T-cell (primary cell): ENCODE measurements at regions of chr1 and their contacts with region 1.

Region 1: DNA sequence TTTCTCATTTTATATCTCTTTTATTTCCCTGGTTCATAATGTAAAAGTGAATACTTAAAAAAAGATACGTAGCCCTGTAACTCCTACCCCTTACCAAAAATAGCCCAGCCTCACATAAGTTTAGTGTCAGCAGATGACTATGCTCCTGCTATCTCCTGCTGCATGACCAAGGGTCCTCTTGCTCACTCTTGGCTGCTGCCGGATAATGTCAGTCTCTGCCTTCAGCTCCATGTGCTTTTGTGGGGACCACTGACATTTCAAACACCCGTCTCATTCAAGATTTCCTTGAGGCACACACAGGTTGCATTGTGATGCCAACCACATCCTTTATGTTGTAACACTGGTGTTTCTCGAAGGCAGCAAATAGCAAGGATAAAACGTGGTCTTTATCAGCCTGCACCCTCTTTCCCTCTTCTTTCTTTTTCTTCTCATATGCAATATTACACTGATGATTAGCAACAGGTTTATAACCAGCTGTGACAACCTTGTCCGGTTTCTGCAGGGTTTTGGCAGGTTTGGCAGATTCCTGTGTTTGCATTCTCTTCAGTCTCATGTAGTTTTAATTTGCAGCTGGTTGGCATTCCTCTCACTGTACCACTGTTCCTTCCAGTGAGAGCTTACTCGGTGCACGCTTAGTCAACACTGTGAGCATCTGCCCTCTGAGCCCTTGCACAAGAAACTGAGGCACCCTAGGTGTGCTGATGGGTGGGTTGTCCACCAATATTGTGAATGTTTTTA is 62.2 kb downstream of the ZNF684 start:
- DNase-seq: no peak
- ATAC-seq: no peak
- H3K4me3 ChIP-seq: no peak overlapping the region
- H3K4me3 Mint-ChIP-seq: no peak overlapping the region
- H3K27ac ChIP-seq: no peak overlapping the region
- H3K27ac Mint-ChIP-seq: no peak overlapping the region
- H3K4me1 ChIP-seq: no peaks in the 10 kb centered on the region
- H3K4me1 Mint-ChIP-seq: peaks cover 6 to 11% (median 8%) of the 10 kb centered on the region in 3 donors
- H3K27me3 ChIP-seq: peaks cover 0 to 15% of the 10 kb centered on the region in 2 experiments
- H3K27me3 Mint-ChIP-seq: peaks cover 3 to 9% of the 10 kb centered on the region in 2 donors

Region 2: DNA sequence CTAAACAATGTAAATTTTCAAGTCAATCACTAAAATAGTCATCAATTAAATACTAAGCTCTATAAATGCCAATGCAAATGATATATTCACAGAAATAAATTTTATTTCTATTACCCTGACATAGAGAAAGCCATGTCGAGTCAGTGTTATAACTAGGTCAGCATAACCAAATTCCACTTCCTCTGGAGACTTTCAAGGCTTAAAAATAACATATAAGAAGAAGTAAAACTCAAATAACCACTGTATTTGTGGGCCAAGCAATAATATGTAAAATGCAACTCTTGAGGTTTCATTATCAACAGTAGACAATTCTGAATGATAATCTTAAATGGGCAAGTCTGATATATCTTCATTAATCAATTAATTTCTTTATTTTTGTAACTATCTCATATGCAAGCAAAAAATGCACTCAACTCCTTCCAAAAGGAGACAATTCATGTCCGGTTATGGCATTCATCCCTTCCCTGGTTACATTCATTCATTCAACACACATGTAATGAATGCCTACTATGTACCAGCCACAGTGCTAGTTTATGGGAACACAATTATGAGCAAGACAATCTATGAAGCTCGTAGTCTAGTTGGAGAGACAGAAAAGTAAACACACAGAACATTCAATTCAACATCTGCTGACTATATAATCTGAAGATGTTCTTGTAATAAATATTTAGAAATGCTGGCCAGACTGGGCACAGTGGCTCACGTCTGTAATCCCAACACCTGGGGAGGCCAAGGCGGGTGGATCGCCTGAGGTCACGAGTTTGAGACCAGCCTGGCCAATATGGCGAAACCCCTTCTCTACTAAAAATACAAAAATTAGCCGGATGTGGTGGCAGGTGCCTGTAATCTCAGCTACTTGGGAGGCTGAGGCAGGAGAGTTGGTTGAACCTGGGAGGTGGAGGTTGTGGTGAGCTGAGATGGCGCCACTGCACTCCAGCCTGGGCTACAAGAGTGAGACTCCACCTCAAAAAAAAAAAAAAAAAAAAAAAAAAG is 590.2 kb before region 1 on chr1:
- CTCF ChIA-PET with region 1: no interaction called
- POLR2A ChIA-PET with region 1: interaction called in 1 of 2 experiments, 13 read pairs
- DNase-seq: no peak
- ATAC-seq: no peak
- H3K4me3 ChIP-seq: no peak overlapping the region
- H3K4me3 Mint-ChIP-seq: no peak overlapping the region
- H3K27ac ChIP-seq: no peak overlapping the region
- H3K27ac Mint-ChIP-seq: peak overlapping the region in 1 of 2 donors; percentile 72
- H3K4me1 ChIP-seq: peaks cover 0 to 4% of the 10 kb centered on the region in 2 experiments
- H3K4me1 Mint-ChIP-seq: peaks cover 0 to 19% (median 5%) of the 10 kb centered on the region in 3 donors
- H3K27me3 ChIP-seq: no peaks in the 10 kb centered on the region
- H3K27me3 Mint-ChIP-seq: no peaks in the 10 kb centered on the region

Region 3: GRCh38 chr1:40130892-40131291 is 462.7 kb before region 1 on chr1:
- CTCF ChIA-PET with region 1: no interaction called
- POLR2A ChIA-PET with region 1: interaction called in 1 of 2 experiments, 13 read pairs
- DNase-seq: no peak
- ATAC-seq: no peak
- H3K4me3 ChIP-seq: no peak overlapping the region
- H3K4me3 Mint-ChIP-seq: no peak overlapping the region
- H3K27ac ChIP-seq: no peak overlapping the region
- H3K27ac Mint-ChIP-seq: no peak overlapping the region
- H3K4me1 ChIP-seq: no peaks in the 10 kb centered on the region
- H3K4me1 Mint-ChIP-seq: no peaks in the 10 kb centered on the region
- H3K27me3 ChIP-seq: peaks cover 0 to 38% of the 10 kb centered on the region in 2 experiments
- H3K27me3 Mint-ChIP-seq: peaks cover 15% of the 10 kb centered on the region in 2 donors